ENCODE measurements at regions of chr2 and their contacts with region 1.

Region 1: GRCh38 chr2:128736689-128737545 is 418.2 kb upstream of the HS6ST1 start:
- DNase-seq: peak; percentile 88
- ATAC-seq: peak; percentile 77

Region 2: GRCh38 chr2:129253461-129253812 is 516.5 kb after region 1 on chr2:
- intact Hi-C with region 1: loop called (anchors 5 kb)
- DNase-seq: no peak
- ATAC-seq: peak; percentile 49

Region 3: DNA sequence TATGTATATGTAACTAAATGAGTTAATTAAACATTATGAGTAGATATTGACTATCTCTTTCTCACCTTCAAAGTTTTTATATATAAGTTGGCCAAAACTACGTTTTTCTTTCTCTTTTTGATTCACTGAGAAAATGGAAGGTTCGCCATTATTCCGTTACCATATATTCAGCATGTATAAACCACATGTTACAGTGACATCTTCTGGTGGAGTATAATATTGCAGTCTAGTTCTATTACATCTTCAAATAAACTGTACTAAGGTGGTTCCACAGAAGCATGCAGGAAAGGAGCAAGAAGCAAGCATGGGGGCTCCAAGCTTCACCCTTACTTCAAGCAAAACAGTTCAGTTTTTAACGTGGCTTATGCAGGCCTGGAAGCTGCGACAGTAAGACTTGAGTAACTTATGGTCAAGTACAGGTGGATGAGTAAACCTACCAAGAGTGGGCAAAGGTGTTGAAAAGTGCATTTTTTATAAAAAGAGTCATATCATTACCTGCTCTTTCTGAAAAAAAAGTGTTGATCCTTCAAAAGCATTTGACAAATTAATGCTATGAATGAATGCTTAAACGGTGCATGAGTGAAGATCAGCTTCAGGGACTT is 1112.7 kb after region 1 on chr2:
- intact Hi-C with region 1: loop called (anchors 10 kb)
- DNase-seq: no peak
- ATAC-seq: peak; percentile 67

Measured in Right ventricle myocardium inferior (tissue), 1 donor.